ENCODE measurements at regions of chr14 and their contacts with region 1.

Region 1: DNA sequence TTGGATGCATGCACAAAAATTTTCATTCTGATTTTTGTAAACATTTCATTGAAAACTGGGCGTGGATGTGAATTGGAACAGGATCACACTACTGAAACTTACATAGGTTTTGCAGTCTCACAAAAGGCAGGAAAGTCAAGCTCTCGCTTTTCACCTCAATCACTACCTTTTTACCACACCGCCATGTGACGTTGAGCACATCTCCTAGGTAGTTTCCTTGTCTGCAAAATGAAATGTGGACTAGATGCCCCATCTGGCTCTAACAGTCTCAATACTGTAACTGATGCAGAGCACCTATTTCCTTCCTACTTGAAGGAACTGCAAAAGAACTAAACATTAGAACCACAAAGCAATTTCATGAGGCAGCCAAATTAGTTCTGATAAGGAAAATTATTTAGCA is 4.4 kb upstream of the YY1 start:
- DNase-seq: peak; percentile 55
- H3K4me3 Mint-ChIP-seq: no peak overlapping the region
- H3K27ac Mint-ChIP-seq: peak overlapping the region; percentile 81
- H3K4me1 Mint-ChIP-seq: peaks cover 54% of the 10 kb centered on the region
- H3K27me3 Mint-ChIP-seq: no peaks in the 10 kb centered on the region

Region 2: DNA sequence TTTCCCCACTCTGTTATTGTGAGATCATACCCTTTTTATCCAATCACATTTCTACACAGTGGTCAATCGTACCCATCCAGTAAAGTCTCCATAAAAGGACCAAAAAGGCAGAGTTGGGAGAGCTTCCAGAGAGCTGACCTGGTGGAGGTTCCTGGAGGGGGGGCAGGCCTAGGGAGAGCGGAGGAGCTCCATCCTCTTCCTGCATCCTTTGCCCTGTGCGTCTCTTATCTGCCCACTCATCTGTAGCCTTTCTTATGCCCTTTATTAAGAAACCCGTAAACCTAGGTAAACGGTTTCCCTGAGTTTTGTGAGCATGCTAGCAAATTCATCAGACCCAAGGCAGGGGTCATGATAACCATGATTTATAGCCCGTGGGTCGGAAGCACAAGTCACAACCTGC is 143.1 kb before region 1 on chr14:
- CTCF ChIA-PET with region 1: no interaction called
- intact Hi-C with region 1: no loop called
- DNase-seq: peak; percentile 30
- H3K4me3 Mint-ChIP-seq: peak overlapping the region; percentile 58
- H3K27ac Mint-ChIP-seq: peak overlapping the region; percentile 85
- H3K4me1 Mint-ChIP-seq: peaks cover 89% of the 10 kb centered on the region
- H3K27me3 Mint-ChIP-seq: no peaks in the 10 kb centered on the region

Region 3: DNA sequence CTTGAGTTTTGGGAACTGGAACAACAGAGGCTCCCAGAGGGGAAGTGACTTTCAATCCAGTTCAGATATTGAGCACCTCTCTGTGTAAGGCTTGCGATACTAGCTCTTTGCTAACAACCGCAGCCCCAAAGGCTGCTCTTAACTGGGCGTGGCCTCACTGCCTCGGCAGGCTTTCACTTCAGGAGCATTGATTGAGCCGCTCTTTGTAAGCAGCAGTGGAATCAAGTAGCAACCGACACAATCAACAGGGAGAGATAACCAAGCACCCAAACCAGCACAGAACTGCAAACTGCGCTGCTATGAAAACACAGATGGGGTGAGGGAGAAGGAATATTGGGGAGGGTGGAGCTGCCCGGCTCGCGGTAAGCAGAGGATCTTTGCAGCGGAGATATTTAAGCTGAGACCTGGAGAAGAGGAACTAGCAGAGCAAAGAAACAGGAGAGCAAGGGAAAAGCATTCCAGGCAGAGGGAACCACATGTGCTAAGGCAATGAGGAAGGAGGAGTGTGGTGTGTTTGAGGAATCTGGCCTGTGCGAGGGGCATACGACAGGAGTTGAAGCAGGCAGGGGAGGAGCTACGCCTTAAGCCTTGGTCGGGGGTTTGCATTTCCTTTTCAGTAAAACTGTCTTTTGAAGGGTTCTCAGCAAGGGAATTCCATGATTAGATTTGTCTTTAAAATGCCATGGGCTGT is 12.8 kb before region 1 on chr14:
- CTCF ChIA-PET with region 1: interaction called, 37 read pairs
- intact Hi-C with region 1: loop called (anchors 1 kb)
- DNase-seq: peak; percentile 81
- H3K4me3 Mint-ChIP-seq: no peak overlapping the region
- H3K27ac Mint-ChIP-seq: no peak overlapping the region
- H3K4me1 Mint-ChIP-seq: peaks cover 8% of the 10 kb centered on the region
- H3K27me3 Mint-ChIP-seq: no peaks in the 10 kb centered on the region